WTC11 (cell line): ENCODE measurements at regions of chr15 and their contacts with region 1.

Region 1: GRCh38 chr15:38414357-38414756 is 39.6 kb upstream of the FAM98B start:
- DNase-seq: peak; percentile 67
- ATAC-seq: peak; percentile 98
- H3K4me3 Mint-ChIP-seq: no peak overlapping the region
- H3K27ac Mint-ChIP-seq: no peak overlapping the region
- H3K4me1 Mint-ChIP-seq: no peaks in the 10 kb centered on the region
- H3K27me3 Mint-ChIP-seq: no peaks in the 10 kb centered on the region
- CTCF ChIP-seq: peak; percentile 37

Region 2: GRCh38 chr15:37995461-37996347 is 418.7 kb before region 1 on chr15:
- CTCF ChIA-PET with region 1: interaction called, 34 read pairs
- POLR2A ChIA-PET with region 1: no interaction called
- DNase-seq: no peak
- ATAC-seq: peak; percentile 85
- H3K4me3 Mint-ChIP-seq: no peak overlapping the region
- H3K27ac Mint-ChIP-seq: no peak overlapping the region
- H3K4me1 Mint-ChIP-seq: no peaks in the 10 kb centered on the region
- H3K27me3 Mint-ChIP-seq: no peaks in the 10 kb centered on the region
- CTCF ChIP-seq: peak; percentile 29

Region 3: GRCh38 chr15:38002883-38003477 is 411.4 kb before region 1 on chr15:
- CTCF ChIA-PET with region 1: interaction called, 12 read pairs
- POLR2A ChIA-PET with region 1: no interaction called
- DNase-seq: peak; percentile 79
- ATAC-seq: peak; percentile 98
- H3K4me3 Mint-ChIP-seq: no peak overlapping the region
- H3K27ac Mint-ChIP-seq: no peak overlapping the region
- H3K4me1 Mint-ChIP-seq: no peaks in the 10 kb centered on the region; the same call in 1 of the 2 replicates
- H3K27me3 Mint-ChIP-seq: no peaks in the 10 kb centered on the region
- CTCF ChIP-seq: peak; percentile 53; the same call in 1 of the 2 replicates

Region 4: DNA sequence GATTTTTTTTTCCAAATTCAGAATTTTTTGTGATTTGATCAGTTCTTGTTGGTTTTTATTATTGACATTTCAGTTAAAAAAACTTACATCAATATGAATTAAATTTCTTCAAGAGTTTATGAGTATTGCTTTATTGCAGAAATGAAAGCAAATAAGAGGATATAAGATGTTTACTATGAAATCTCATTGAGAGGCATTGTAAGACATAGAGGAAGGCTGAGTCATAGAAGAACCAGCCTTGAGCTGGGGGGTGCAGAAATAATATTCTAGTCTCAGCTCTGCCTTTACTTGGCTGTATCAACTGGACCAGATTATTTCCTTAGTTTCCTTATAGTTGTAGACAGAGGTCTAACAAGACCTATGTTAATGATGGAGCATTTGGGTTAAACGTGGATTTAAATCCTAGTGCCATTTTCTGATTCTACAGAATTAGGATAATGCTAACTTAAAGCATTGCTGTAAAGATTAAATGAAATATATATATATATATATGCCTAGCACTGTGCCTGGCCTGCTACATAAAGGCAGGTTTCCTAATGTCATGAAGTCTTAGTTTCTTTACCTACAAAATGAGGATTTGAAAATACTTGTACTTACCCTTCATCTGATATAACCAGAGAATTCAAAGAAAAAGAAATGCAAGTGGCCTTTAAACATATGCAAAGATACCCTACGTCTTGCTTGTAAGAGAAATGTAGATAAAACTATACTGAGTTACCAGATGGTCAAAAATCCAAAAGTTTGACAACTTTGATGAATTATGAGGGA is 46.9 kb after region 1 on chr15:
- CTCF ChIA-PET with region 1: no interaction called
- POLR2A ChIA-PET with region 1: no interaction called
- DNase-seq: no peak
- ATAC-seq: no peak
- H3K4me3 Mint-ChIP-seq: no peak overlapping the region
- H3K27ac Mint-ChIP-seq: no peak overlapping the region
- H3K4me1 Mint-ChIP-seq: peaks cover 9% of the 10 kb centered on the region
- H3K27me3 Mint-ChIP-seq: no peaks in the 10 kb centered on the region
- CTCF ChIP-seq: no peak